HepG2 (cell line): ENCODE measurements at regions of chr19 and their contacts with region 1.

Region 1: DNA sequence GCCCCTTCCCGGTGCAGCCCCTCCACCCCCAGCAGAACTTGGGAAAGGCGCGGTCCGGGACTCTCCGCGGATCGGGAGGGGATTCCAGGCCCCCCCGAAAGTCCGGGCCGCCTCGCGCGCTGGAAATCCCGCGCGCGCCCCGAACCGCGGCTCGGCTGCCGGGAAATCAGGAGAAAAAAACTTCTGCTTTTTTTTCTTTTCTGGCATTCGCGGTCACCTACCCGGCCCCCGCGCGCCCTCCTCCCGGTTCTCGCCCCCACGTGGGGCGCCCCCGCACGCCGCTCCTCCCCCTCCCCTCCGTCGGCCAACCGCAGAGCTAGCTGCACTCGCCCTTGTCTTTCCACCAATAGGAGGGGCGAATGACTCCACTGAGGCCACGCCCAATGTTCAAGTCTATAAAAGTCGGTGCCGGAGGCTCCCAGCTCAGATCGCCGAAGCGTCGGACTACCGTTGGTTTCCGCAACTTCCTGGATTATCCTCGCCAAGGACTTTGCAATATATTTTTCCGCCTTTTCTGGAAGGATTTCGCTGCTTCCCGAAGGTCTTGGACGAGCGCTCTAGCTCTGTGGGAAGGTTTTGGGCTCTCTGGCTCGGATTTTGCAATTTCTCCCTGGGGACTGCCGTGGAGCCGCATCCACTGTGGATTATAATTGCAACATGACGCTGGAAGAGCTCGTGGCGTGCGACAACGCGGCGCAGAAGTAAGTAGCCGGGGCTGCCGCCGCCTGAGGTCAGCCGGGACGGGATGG is at the start of gene GADD45B:
- DNase-seq: peak; percentile 93
- ATAC-seq: peak; percentile 56
- H3K4me3 ChIP-seq: peak within 1 kb of the TSS; percentile 92 to 100 (median 98)
- H3K27ac ChIP-seq: peak within 1 kb of the TSS; percentile 56
- H3K4me1 ChIP-seq: peaks cover 33% of the 10 kb centered on the region
- H3K27me3 ChIP-seq: no peaks in the 10 kb centered on the region; a peak in 2 of 5 replicates
- CTCF ChIP-seq: no peak
- EP300 ChIP-seq: no peak; a peak in 2 of 4 replicates
- POLR2A ChIP-seq: peak; percentile 100
- RAD21 ChIP-seq: peak; percentile 36; the same call in 1 of the 2 replicates
- total RNA-seq, gene GADD45B: 3.2 and 4.6 TPM in 2 replicates

Region 2: DNA sequence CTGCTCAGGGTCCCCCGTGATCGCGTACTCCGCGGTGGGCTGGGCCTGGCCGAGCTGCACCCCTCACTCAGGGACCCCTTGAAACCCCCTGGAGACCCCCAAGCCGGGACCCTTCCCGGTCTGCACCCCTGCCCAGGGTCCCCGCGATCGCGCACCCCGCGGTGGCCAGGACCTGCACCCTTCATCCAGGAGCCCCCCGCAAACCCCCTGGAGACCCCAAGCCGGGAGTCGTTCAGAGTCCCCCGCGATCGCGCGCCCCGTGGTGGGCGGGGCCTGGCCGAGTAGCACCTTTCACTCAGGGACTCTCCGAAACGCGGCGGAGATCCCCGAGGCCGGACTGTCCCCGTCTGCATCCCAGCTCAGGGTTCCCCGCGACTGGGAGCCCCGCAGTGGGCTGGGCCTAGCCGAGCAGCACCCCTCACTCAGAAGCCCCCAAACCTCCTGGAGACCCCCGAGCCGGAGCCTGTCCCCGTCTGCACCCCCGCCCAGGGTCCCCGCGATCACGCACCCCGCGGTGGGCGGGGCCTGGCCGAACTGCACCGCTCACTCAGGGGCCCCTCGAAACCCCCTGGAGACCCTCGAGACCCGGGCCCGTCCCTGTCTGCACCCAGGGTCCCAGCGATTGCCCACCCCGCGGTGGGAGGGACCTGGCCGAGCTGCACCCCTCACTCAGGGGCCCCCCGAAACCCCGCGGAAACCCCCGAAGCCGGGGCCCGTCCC is 19.9 kb before region 1 on chr19:
- CTCF ChIA-PET with region 1: no interaction called
- POLR2A ChIA-PET with region 1: interaction called, 31 read pairs
- in situ Hi-C with region 1: no loop called
- intact Hi-C with region 1: no loop called
- DNase-seq: no peak
- ATAC-seq: no peak
- H3K4me3 ChIP-seq: peak overlapping the region; percentile 84 to 95 (median 85)
- H3K27ac ChIP-seq: peak overlapping the region; percentile 64
- H3K4me1 ChIP-seq: peaks cover 49% of the 10 kb centered on the region
- H3K27me3 ChIP-seq: no peaks in the 10 kb centered on the region
- CTCF ChIP-seq: no peak
- EP300 ChIP-seq: no peak
- POLR2A ChIP-seq: no peak
- RAD21 ChIP-seq: no peak

Region 3: DNA sequence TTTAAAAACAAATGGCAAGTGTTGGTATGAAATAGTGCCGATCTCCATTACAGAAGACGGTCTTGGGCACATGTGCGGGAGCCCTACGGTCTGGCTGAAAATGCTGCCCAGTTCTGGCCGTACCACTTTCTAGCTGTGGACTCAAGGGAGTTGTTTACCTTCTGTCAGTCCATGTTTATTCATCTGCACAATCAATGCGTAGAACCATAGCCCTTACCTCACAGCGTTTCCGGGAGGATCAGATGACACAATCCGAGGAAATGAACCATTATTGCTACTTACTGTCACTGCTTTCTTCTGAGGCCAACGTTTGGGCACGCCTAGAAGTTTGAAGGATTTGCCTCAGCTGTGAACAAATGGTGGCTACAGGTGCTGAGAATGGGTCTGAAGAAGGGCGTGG is 31.2 kb after region 1 on chr19:
- CTCF ChIA-PET with region 1: no interaction called
- POLR2A ChIA-PET with region 1: interaction called, 32 read pairs
- in situ Hi-C with region 1: no loop called
- intact Hi-C with region 1: no loop called
- DNase-seq: peak; percentile 92
- ATAC-seq: peak; percentile 90
- H3K4me3 ChIP-seq: peak overlapping the region in 1 of 3 experiments; percentile 28; a peak in 2 of 6 replicates
- H3K27ac ChIP-seq: peak overlapping the region; percentile 33
- H3K4me1 ChIP-seq: peaks cover 53% of the 10 kb centered on the region
- H3K27me3 ChIP-seq: peaks cover 0 to 25% of the 10 kb centered on the region in 2 experiments; a peak in 4 of 5 replicates
- CTCF ChIP-seq: no peak
- EP300 ChIP-seq: peak in 1 of 2 experiments; percentile 63; a peak in 2 of 4 replicates
- POLR2A ChIP-seq: no peak
- RAD21 ChIP-seq: no peak

Region 4: DNA sequence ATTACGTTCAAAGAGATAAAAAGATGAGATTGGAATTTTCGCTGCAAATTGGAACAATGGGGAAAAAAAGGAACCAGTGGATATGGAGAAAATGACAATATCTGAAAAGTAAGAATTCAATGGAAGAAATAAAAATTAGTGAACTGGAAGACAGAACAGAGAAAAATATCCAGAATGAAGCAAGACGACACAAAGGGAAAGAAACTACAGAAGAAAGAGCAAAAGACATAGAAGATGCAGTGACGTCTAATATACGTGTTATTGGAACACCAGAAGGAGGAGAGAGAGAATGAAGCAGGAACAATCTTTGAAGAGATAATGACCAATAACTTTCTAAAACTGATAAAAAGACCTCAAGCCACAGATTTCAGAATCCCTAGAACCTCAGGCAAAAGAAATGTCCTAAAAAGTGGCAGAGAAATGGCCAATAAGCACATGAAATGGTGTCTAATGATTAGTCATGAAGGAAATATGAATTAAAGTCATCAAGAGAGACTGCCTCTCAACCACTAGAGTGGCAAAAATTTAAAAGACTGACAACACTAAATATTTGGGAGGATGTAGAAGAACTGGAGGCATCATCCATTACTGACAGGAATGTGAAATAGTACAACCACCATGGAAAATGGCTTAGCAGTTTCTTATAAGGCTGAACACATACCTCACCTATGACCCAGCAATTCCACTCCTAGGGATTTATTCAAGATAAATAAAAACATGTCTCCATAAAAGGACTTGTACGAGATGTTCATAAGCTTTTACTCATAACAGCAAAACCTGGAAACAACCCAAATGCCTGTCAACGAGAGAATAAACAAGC is 56.6 kb after region 1 on chr19:
- CTCF ChIA-PET with region 1: no interaction called
- POLR2A ChIA-PET with region 1: interaction called, 29 read pairs
- in situ Hi-C with region 1: no loop called
- intact Hi-C with region 1: loop called (anchors 5 kb)
- DNase-seq: no peak
- ATAC-seq: no peak
- H3K4me3 ChIP-seq: no peak overlapping the region
- H3K27ac ChIP-seq: no peak overlapping the region
- H3K4me1 ChIP-seq: peaks cover 67% of the 10 kb centered on the region
- H3K27me3 ChIP-seq: no peaks in the 10 kb centered on the region
- CTCF ChIP-seq: no peak
- EP300 ChIP-seq: no peak
- POLR2A ChIP-seq: no peak
- RAD21 ChIP-seq: no peak

Region 5: DNA sequence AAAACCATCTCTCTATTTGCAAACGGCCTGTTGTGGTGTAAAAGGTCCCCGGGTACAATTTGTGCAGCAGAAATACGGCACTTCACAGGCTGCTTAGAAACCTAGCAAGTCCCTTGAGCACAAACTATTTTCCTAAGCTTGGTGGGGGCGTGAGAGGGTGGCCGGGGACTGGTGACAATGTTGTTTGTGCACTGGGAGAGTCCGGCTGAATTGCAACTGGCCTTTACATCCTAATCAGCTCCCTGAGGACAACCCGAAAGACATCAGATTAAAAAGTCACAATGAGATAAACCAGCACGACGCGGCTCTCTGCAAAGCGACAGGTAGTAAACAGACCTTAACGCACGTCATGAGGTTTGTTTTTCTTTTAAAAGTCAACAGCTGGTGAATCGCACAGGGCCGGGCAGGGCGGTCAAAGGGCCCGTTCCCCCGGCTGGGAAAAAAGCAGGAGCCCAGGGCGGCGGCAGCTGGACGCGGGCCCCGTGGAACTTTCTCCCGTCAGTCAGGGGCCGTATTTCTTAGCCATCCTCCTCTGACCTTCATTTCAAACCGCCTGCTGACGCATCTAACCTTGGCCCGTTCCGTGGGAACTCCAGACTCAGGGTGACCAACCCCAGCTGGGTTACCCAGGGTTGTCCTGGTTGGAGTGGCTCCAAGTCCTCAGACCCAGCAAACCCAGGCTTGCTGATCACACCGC is 112.4 kb after region 1 on chr19:
- CTCF ChIA-PET with region 1: no interaction called
- POLR2A ChIA-PET with region 1: interaction called, 34 read pairs
- in situ Hi-C with region 1: no loop called
- intact Hi-C with region 1: no loop called
- DNase-seq: peak; percentile 77
- ATAC-seq: peak; percentile 91
- H3K4me3 ChIP-seq: peak overlapping the region; percentile 17 to 55 (median 21); a peak in 5 of 6 replicates
- H3K27ac ChIP-seq: peak overlapping the region; percentile 72
- H3K4me1 ChIP-seq: peaks cover 57% of the 10 kb centered on the region
- H3K27me3 ChIP-seq: no peaks in the 10 kb centered on the region
- CTCF ChIP-seq: no peak
- EP300 ChIP-seq: no peak
- POLR2A ChIP-seq: no peak
- RAD21 ChIP-seq: no peak

Region 6: GRCh38 chr19:2624537-2625091 is 148.7 kb after region 1 on chr19:
- CTCF ChIA-PET with region 1: no interaction called
- POLR2A ChIA-PET with region 1: interaction called, 25 read pairs
- in situ Hi-C with region 1: no loop called
- intact Hi-C with region 1: no loop called
- DNase-seq: peak; percentile 48
- ATAC-seq: peak; percentile 88
- H3K4me3 ChIP-seq: peak overlapping the region in 2 of 3 experiments; percentile 26 to 63; a peak in 3 of 6 replicates
- H3K27ac ChIP-seq: no peak overlapping the region
- H3K4me1 ChIP-seq: peaks cover 67% of the 10 kb centered on the region
- H3K27me3 ChIP-seq: no peaks in the 10 kb centered on the region
- CTCF ChIP-seq: no peak; the same call in 1 of the 2 replicates
- EP300 ChIP-seq: no peak
- POLR2A ChIP-seq: no peak
- RAD21 ChIP-seq: no peak